Colonic mucosa (tissue), 4 donors: ENCODE measurements at regions of chr3 and their contacts with region 1.

Region 1: GRCh38 chr3:114827495-114827894 is 319.6 kb downstream of the ZBTB20 start:
- DNase-seq: no peak
- H3K4me3 ChIP-seq: no peak overlapping the region
- H3K27ac ChIP-seq: no peak overlapping the region
- H3K4me1 ChIP-seq: no peaks in the 10 kb centered on the region
- H3K27me3 ChIP-seq: no peaks in the 10 kb centered on the region
- CTCF ChIP-seq: peak; percentile 64

Region 2: DNA sequence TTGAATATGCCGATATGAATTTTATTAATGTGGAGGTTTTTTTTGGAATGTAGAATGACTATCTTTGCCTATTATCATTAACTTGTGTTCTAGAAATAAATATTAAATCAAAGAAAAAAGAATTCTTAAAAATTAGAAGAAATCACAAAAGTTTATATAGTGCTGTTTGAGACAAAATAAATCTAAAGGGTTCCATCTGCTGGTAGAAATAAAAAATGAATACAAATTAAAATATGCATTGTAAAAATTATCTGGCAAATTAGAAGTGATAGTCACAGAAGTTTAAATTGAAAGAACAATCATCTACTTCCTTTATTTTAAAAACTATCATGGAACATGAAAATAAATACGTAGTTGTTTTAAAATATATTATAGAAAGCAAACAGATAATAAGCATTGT is 342.3 kb after region 1 on chr3:
- intact Hi-C with region 1: loop called (anchors 10 kb)
- DNase-seq: no peak
- H3K4me3 ChIP-seq: no peak overlapping the region
- H3K27ac ChIP-seq: no peak overlapping the region
- H3K4me1 ChIP-seq: no peaks in the 10 kb centered on the region
- H3K27me3 ChIP-seq: no peaks in the 10 kb centered on the region
- CTCF ChIP-seq: no peak